Calu3 (cell line): ENCODE measurements at regions of chr15 and their contacts with region 1.

Region 1: GRCh38 chr15:81480645-81481053 is 106.6 kb upstream of the TMC3 start:
- DNase-seq: peak; percentile 70
- H3K4me3 Mint-ChIP-seq: no peak overlapping the region
- H3K27ac Mint-ChIP-seq: no peak overlapping the region
- H3K4me1 Mint-ChIP-seq: no peaks in the 10 kb centered on the region
- H3K27me3 Mint-ChIP-seq: peaks cover 14% of the 10 kb centered on the region
- CTCF ChIP-seq: peak; percentile 67

Region 2: GRCh38 chr15:81939604-81940440 is 459.2 kb after region 1 on chr15:
- CTCF ChIA-PET with region 1: interaction called, 4 read pairs
- intact Hi-C with region 1: loop called (anchors 1 kb)
- DNase-seq: peak; percentile 37
- H3K4me3 Mint-ChIP-seq: no peak overlapping the region
- H3K27ac Mint-ChIP-seq: no peak overlapping the region
- H3K4me1 Mint-ChIP-seq: no peaks in the 10 kb centered on the region
- H3K27me3 Mint-ChIP-seq: peaks cover 13% of the 10 kb centered on the region
- CTCF ChIP-seq: peak; percentile 40

Region 3: DNA sequence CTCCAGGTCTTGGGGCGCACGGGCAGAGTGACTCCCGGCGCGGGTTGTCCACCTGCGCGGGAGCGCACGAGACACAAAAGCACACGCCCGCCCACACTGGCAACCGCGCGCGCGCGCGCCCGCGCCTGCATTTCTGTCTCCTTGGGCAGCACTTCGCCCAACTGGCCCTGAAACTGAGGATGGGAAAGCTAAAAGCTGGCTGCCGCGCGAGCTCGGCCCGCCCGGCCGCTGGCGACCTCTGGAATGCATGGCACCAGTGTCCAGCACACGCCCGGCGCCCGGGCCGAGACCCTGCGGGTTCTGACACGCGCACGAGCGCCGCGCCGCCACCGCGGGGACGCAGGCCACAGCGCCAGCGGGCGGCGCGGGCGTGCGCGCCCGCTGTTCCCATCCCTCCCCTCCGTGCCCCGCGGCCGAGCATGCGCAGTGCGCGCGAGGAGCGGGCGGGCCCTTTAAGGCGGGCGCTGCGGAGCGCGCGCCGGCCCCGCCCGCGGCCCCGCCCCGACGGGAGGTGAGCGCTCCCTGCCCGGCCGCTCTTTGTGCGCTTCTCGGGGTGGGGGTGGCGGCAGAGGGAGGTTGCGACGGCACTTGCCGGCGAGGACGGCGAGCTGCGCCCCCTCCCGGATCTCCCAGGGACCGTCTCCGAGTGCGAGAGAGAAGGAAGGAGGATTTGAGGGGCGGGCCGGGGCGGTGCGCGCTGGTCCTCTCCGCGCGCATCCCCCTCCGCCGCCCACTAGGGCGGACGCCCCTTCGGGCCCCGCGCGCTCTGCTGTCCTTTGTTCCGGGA is 566.2 kb after region 1 on chr15:
- CTCF ChIA-PET with region 1: no interaction called
- intact Hi-C with region 1: loop called (anchors 5 kb)
- DNase-seq: peak; percentile 97
- H3K4me3 Mint-ChIP-seq: peak overlapping the region; percentile 92
- H3K27ac Mint-ChIP-seq: peak overlapping the region; percentile 50
- H3K4me1 Mint-ChIP-seq: peaks cover 13% of the 10 kb centered on the region
- H3K27me3 Mint-ChIP-seq: peaks cover 46% of the 10 kb centered on the region
- CTCF ChIP-seq: peak; percentile 71

Region 4: GRCh38 chr15:82197733-82198594 is 717.3 kb after region 1 on chr15:
- CTCF ChIA-PET with region 1: no interaction called
- intact Hi-C with region 1: loop called (anchors 5 kb)
- DNase-seq: peak; percentile 80
- H3K4me3 Mint-ChIP-seq: no peak overlapping the region
- H3K27ac Mint-ChIP-seq: no peak overlapping the region
- H3K4me1 Mint-ChIP-seq: peaks cover 6% of the 10 kb centered on the region
- H3K27me3 Mint-ChIP-seq: no peaks in the 10 kb centered on the region
- CTCF ChIP-seq: peak; percentile 82